K562 (cell line): ENCODE measurements at regions of chr7 and their contacts with region 1.

Region 1: GRCh38 chr7:10889266-10889898 is 84.3 kb upstream of the PHF14 start:
- DNase-seq: peak; percentile 63 to 71 (median 64)
- ATAC-seq: peak; percentile 95
- H3K4me3 ChIP-seq: no peak overlapping the region
- H3K27ac ChIP-seq: no peak overlapping the region
- H3K4me1 ChIP-seq: no peaks in the 10 kb centered on the region
- H3K27me3 ChIP-seq: no peaks in the 10 kb centered on the region
- CTCF ChIP-seq: peak; percentile 73 to 91 (median 84)
- EP300 ChIP-seq: no peak
- POLR2A ChIP-seq: no peak
- RAD21 ChIP-seq: peak; percentile 84 to 93

Region 2: GRCh38 chr7:10412422-10413019 is 476.9 kb before region 1 on chr7:
- CTCF ChIA-PET with region 1: no interaction called
- POLR2A ChIA-PET with region 1: no interaction called
- in situ Hi-C with region 1: no loop called
- intact Hi-C with region 1: loop called (anchors 10 kb)
- DNase-seq: peak; percentile 33 to 58 (median 36)
- ATAC-seq: peak; percentile 84
- H3K4me3 ChIP-seq: no peak overlapping the region
- H3K27ac ChIP-seq: no peak overlapping the region
- H3K4me1 ChIP-seq: no peaks in the 10 kb centered on the region
- H3K27me3 ChIP-seq: no peaks in the 10 kb centered on the region
- CTCF ChIP-seq: peak; percentile 35 to 60 (median 36); a peak in 4 of 6 replicates
- EP300 ChIP-seq: no peak
- POLR2A ChIP-seq: no peak
- RAD21 ChIP-seq: peak; percentile 44 to 57

Region 3: DNA sequence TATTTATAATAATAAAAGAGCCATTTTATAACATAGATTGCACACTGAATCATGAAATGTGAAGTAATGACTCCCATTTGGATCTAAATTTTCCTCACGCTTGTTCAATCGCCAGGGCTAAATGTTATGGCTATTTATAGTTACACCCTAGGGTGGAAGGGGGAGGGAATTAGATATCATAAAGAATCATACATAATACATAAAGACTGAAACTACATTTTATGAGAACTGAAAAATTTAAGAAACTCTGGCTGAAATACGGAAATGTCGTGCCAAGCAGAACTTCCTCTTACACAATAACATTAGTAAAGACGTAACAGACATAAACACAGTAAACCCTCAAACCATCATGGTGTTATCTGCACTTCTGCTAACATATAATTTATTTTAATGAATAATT is 243.2 kb before region 1 on chr7:
- CTCF ChIA-PET with region 1: no interaction called
- POLR2A ChIA-PET with region 1: no interaction called
- in situ Hi-C with region 1: no loop called
- intact Hi-C with region 1: loop called (anchors 5 kb)
- DNase-seq: no peak
- ATAC-seq: no peak
- H3K4me3 ChIP-seq: no peak overlapping the region
- H3K27ac ChIP-seq: no peak overlapping the region
- H3K4me1 ChIP-seq: peaks cover 0 to 8% of the 10 kb centered on the region in 2 experiments; a peak in 3 of 5 replicates
- H3K27me3 ChIP-seq: no peaks in the 10 kb centered on the region
- CTCF ChIP-seq: no peak
- EP300 ChIP-seq: no peak
- POLR2A ChIP-seq: no peak
- RAD21 ChIP-seq: no peak

Region 4: GRCh38 chr7:10696064-10696463 is 193.3 kb before region 1 on chr7:
- CTCF ChIA-PET with region 1: no interaction called
- POLR2A ChIA-PET with region 1: no interaction called
- in situ Hi-C with region 1: no loop called
- intact Hi-C with region 1: no loop called
- DNase-seq: no peak
- ATAC-seq: no peak
- H3K4me3 ChIP-seq: no peak overlapping the region
- H3K27ac ChIP-seq: no peak overlapping the region
- H3K4me1 ChIP-seq: no peaks in the 10 kb centered on the region
- H3K27me3 ChIP-seq: no peaks in the 10 kb centered on the region
- CTCF ChIP-seq: no peak
- EP300 ChIP-seq: no peak
- POLR2A ChIP-seq: no peak
- RAD21 ChIP-seq: no peak

Region 5: DNA sequence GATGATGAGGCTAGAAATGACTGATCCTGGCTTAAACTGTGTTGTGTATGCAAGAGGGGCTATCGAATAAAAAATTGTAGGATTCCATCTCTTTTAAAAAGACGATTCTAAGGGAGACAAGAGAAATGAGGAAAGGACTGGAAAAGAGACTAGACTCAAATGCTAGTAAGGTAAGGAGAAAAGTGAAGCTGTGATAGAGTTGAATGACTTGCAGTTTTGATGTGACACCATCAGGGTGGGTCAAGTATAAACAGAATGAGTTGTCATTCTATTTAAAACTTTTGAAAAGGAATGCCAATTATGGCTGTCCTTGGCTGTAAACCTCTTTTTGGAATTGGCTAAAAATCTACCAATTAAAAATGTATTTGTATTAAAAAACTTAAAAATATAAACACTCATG is 100.2 kb before region 1 on chr7:
- CTCF ChIA-PET with region 1: no interaction called
- POLR2A ChIA-PET with region 1: no interaction called
- in situ Hi-C with region 1: no loop called
- intact Hi-C with region 1: loop called (anchors 5 kb)
- DNase-seq: peak in 2 of 4 experiments; percentile 42 to 76
- ATAC-seq: peak; percentile 69
- H3K4me3 ChIP-seq: no peak overlapping the region
- H3K27ac ChIP-seq: peak overlapping the region; percentile 79
- H3K4me1 ChIP-seq: peaks cover 6 to 19% of the 10 kb centered on the region in 2 experiments; a peak in 3 of 5 replicates
- H3K27me3 ChIP-seq: no peaks in the 10 kb centered on the region
- CTCF ChIP-seq: no peak
- EP300 ChIP-seq: 0 out of 2 replicates have a peak, but pooled peaks have one; percentile 42
- POLR2A ChIP-seq: peak; percentile 64
- RAD21 ChIP-seq: peak in 1 of 2 experiments; percentile 13; a peak in 1 of 4 replicates

Region 6: DNA sequence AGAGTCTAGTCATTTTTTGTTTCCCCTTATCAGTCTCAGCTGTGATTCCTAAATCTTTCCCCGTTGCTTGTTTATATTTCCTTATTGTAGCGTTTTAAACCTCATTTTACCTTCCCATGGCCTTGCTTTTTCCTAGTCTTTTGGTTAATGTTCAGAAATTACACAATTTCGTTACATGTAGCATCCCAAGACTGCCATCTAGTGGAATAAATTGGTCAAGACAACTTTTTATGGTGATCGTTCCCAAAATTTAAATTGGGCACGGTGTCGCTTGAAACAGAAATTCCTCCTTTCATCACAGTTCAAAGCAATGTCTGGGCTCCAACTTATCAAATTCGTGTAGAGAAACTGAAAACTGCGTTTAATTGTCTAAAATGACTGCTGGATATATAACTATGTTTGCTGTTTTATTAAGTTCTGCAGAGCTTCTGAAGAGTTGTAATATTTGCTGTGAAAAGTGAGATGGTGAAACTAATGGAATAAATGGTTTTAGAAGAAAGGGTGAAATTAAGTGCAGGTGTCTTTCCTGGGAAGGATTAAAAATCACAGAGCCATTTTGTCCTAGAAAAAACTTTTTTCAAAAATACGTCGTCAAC is 454.5 kb after region 1 on chr7:
- CTCF ChIA-PET with region 1: interaction called, 3 read pairs
- POLR2A ChIA-PET with region 1: no interaction called
- in situ Hi-C with region 1: no loop called
- intact Hi-C with region 1: loop called (anchors 2 kb)
- DNase-seq: peak; percentile 26 to 56 (median 40)
- ATAC-seq: peak; percentile 48; the same call in 2 of the 3 replicates
- H3K4me3 ChIP-seq: no peak overlapping the region
- H3K27ac ChIP-seq: no peak overlapping the region
- H3K4me1 ChIP-seq: no peaks in the 10 kb centered on the region; a peak in 1 of 5 replicates
- H3K27me3 ChIP-seq: no peaks in the 10 kb centered on the region
- CTCF ChIP-seq: peak; percentile 48 to 82 (median 60); a peak in 4 of 6 replicates
- EP300 ChIP-seq: no peak
- POLR2A ChIP-seq: no peak
- RAD21 ChIP-seq: peak; percentile 66 to 82